AG04450 (cell line): ENCODE measurements at regions of chr12 and their contacts with region 1.

Region 1: GRCh38 chr12:30847259-30847658 is 79.3 kb upstream of the TSPAN11 start:
- DNase-seq: peak; percentile 8
- H3K4me3 ChIP-seq: no peak overlapping the region
- H3K27ac ChIP-seq: no peak overlapping the region
- H3K27me3 ChIP-seq: peaks cover 3% of the 10 kb centered on the region
- CTCF ChIP-seq: peak; percentile 71

Region 2: GRCh38 chr12:29309320-29309902 is 1537.8 kb before region 1 on chr12:
- CTCF ChIA-PET with region 1: interaction called, 12 read pairs
- POLR2A ChIA-PET with region 1: no interaction called
- DNase-seq: no peak
- H3K4me3 ChIP-seq: no peak overlapping the region
- H3K27ac ChIP-seq: no peak overlapping the region
- H3K27me3 ChIP-seq: no peaks in the 10 kb centered on the region
- CTCF ChIP-seq: peak; percentile 57

Region 3: GRCh38 chr12:30862486-30862885 is 15.2 kb after region 1 on chr12:
- CTCF ChIA-PET with region 1: interaction called, 19 read pairs
- POLR2A ChIA-PET with region 1: no interaction called
- DNase-seq: no peak
- H3K4me3 ChIP-seq: no peak overlapping the region
- H3K27ac ChIP-seq: no peak overlapping the region
- H3K27me3 ChIP-seq: peaks cover 4% of the 10 kb centered on the region
- CTCF ChIP-seq: no peak

Region 4: GRCh38 chr12:31238764-31239387 is 391.6 kb after region 1 on chr12:
- CTCF ChIA-PET with region 1: interaction called, 80 read pairs
- POLR2A ChIA-PET with region 1: no interaction called
- DNase-seq: no peak
- H3K4me3 ChIP-seq: no peak overlapping the region; the same call in 1 of the 2 replicates
- H3K27ac ChIP-seq: no peak overlapping the region
- H3K27me3 ChIP-seq: peaks cover 33% of the 10 kb centered on the region
- CTCF ChIP-seq: peak; percentile 80